Astrocyte of the cerebellum (primary cell): ENCODE measurements at regions of chr6 and their contacts with region 1.

Region 1: GRCh38 chr6:52664186-52664990 is 6.5 kb upstream of the TMEM14A start:
- DNase-seq: peak; percentile 90
- H3K4me3 ChIP-seq: peak overlapping the region; percentile 59
- CTCF ChIP-seq: no peak

Region 2: GRCh38 chr6:52263709-52264540 is 400.5 kb before region 1 on chr6:
- in situ Hi-C with region 1: loop called (anchors 25 kb)
- DNase-seq: peak; percentile 32
- H3K4me3 ChIP-seq: no peak overlapping the region
- CTCF ChIP-seq: peak; percentile 99

Region 3: GRCh38 chr6:52419809-52420670 is 244.3 kb before region 1 on chr6 and contains the start of gene EFHC1:
- in situ Hi-C with region 1: loop called (anchors 25 kb)
- DNase-seq: peak; percentile 94
- H3K4me3 ChIP-seq: peak within 1 kb of the TSS; percentile 84
- CTCF ChIP-seq: no peak